Dorsolateral prefrontal cortex (tissue), 120 donors: ENCODE measurements at regions of chr14 and their contacts with region 1.

Region 1: DNA sequence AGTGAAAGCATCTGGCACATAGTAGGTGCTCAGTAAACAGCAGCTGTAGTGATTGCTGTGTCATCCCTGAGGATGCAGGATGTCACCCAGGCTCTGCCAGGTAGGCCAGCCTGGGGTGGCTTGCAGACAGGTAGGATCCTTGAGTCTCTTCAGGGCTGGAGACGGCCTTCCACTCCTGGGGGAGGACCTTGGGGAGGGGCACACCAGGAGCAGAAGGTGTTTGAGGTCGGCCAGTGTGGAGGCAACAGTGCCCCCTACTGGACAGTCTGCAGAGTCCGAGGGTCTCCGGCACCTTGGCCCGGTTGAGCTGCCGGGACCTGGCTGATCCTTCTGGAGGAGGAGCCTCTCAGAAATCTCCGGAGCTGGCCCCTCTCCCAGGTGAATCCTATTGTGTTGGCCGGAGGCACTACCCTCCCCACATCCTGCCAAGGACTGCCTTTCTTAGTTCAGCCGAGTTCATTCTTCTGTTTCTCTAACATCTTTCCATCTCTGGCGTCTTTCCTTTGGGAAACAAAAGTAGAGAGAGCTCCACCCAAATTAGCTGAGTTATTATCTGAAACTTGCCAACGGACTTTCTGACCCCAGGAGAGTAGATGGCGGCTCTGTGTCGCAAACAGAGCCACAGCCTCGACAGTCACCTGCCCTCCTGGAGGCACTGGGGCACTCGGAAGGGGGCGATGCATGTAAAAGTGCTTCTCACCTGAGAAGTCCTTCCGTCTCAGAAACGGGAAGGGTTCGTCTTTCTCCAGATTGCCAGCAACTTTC is 41.8 kb upstream of the CLMN start:
- DNase-seq: peak in 2 of 10 donors; percentile 40 to 46
- H3K4me3 ChIP-seq: no peak overlapping the region
- H3K27ac ChIP-seq: peak overlapping the region in 56 of 59 donors; percentile 43 to 97 (median 92)
- H3K27me3 ChIP-seq: peaks cover 0 to 22% (median 0%) of the 10 kb centered on the region in 45 donors
- CTCF ChIP-seq: peak in 55 of 56 donors; percentile 18 to 68 (median 53)

Region 2: GRCh38 chr14:95117937-95118721 is 243.4 kb before region 1 on chr14:
- intact Hi-C with region 1: loop called in 1 of 2 experiments (anchors 10 kb)
- DNase-seq: no peak
- H3K4me3 ChIP-seq: no peak overlapping the region
- H3K27ac ChIP-seq: peak overlapping the region in 57 of 59 donors; percentile 29 to 98 (median 86)
- H3K27me3 ChIP-seq: no peaks in the 10 kb centered on the region
- CTCF ChIP-seq: no peak

Region 3: GRCh38 chr14:95237121-95237876 is 124.3 kb before region 1 on chr14:
- intact Hi-C with region 1: loop called in 1 of 2 experiments (anchors 5 kb)
- DNase-seq: no peak
- H3K4me3 ChIP-seq: no peak overlapping the region
- H3K27ac ChIP-seq: peak overlapping the region in 29 of 59 donors; percentile 1 to 67 (median 30)
- H3K27me3 ChIP-seq: no peaks in the 10 kb centered on the region
- CTCF ChIP-seq: no peak

Region 4: GRCh38 chr14:95408731-95409476 is 47.3 kb after region 1 on chr14:
- intact Hi-C with region 1: loop called in 1 of 2 experiments (anchors 5 kb)
- DNase-seq: peak in 1 of 10 donors; percentile 57
- H3K4me3 ChIP-seq: peak overlapping the region in 1 of 59 donors; percentile 6
- H3K27ac ChIP-seq: peak overlapping the region; percentile 33 to 96 (median 85)
- H3K27me3 ChIP-seq: no peaks in the 10 kb centered on the region
- CTCF ChIP-seq: peak in 1 of 56 donors; percentile 13

Region 5: DNA sequence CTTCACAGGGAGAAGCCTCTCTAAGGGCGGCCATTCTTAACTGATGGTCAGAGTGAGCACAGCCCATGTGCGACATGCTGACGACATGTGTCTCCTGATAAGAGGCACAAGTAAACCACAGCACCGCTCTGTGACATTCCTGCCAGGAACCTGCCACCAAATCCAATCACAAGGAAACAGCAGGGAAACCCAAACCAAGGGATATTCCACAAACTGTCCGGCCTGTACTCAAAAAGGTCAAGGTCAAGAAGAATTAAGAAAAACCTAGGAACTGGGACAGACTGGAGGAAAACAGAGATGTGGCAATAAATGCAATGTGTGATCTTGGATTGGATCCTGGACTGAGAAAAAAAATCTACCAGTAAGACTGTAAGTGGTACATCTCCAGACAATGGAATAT is 63.0 kb after region 1 on chr14:
- intact Hi-C with region 1: loop called in 1 of 2 experiments (anchors 5 kb)
- DNase-seq: no peak
- H3K4me3 ChIP-seq: no peak overlapping the region
- H3K27ac ChIP-seq: no peak overlapping the region
- H3K27me3 ChIP-seq: no peaks in the 10 kb centered on the region
- CTCF ChIP-seq: no peak